ENCODE measurements at regions of chr5 and their contacts with region 1.

Region 1: GRCh38 chr5:14270209-14270702 is 127.1 kb downstream of the TRIO start:
- DNase-seq: no peak
- ATAC-seq: peak; percentile 75
- H3K4me3 Mint-ChIP-seq: no peak overlapping the region
- H3K27ac Mint-ChIP-seq: no peak overlapping the region
- H3K4me1 Mint-ChIP-seq: peaks cover 53% of the 10 kb centered on the region
- H3K27me3 Mint-ChIP-seq: no peaks in the 10 kb centered on the region
- CTCF ChIP-seq: peak; percentile 67

Region 2: GRCh38 chr5:14108170-14108996 is 161.9 kb before region 1 on chr5:
- CTCF ChIA-PET with region 1: interaction called, 70 read pairs
- POLR2A ChIA-PET with region 1: no interaction called
- intact Hi-C with region 1: loop called (anchors 1 kb)
- DNase-seq: no peak
- ATAC-seq: peak; percentile 85
- H3K4me3 Mint-ChIP-seq: peak overlapping the region; percentile 76
- H3K27ac Mint-ChIP-seq: peak overlapping the region; percentile 80
- H3K4me1 Mint-ChIP-seq: peaks cover 40% of the 10 kb centered on the region
- H3K27me3 Mint-ChIP-seq: peaks cover 1% of the 10 kb centered on the region
- CTCF ChIP-seq: no peak

Region 3: GRCh38 chr5:14258840-14259239 is 11.4 kb before region 1 on chr5:
- CTCF ChIA-PET with region 1: interaction called, 21 read pairs
- POLR2A ChIA-PET with region 1: no interaction called
- intact Hi-C with region 1: no loop called
- DNase-seq: no peak
- ATAC-seq: peak; percentile 43
- H3K4me3 Mint-ChIP-seq: peak overlapping the region; percentile 61
- H3K27ac Mint-ChIP-seq: peak overlapping the region; percentile 46
- H3K4me1 Mint-ChIP-seq: peaks cover 84% of the 10 kb centered on the region
- H3K27me3 Mint-ChIP-seq: no peaks in the 10 kb centered on the region
- CTCF ChIP-seq: no peak

Region 4: GRCh38 chr5:14286574-14287421 is 16.5 kb after region 1 on chr5:
- CTCF ChIA-PET with region 1: interaction called, 5 read pairs
- POLR2A ChIA-PET with region 1: interaction called, 3 read pairs
- intact Hi-C with region 1: loop called (anchors 2 kb)
- DNase-seq: peak; percentile 26
- ATAC-seq: peak; percentile 98
- H3K4me3 Mint-ChIP-seq: peak overlapping the region; percentile 54
- H3K27ac Mint-ChIP-seq: peak overlapping the region; percentile 77
- H3K4me1 Mint-ChIP-seq: peaks cover 35% of the 10 kb centered on the region
- H3K27me3 Mint-ChIP-seq: no peaks in the 10 kb centered on the region
- CTCF ChIP-seq: no peak

Measured in activated B cell treated with CpG ODN at 0.5 μM for 24 hours (primary cell).